Naive thymus-derived CD8-positive, alpha-beta T cell (primary cell): ENCODE measurements at regions of chr1 and their contacts with region 1.

Region 1: GRCh38 chr1:207321079-207321789 is at the start of gene CD55:
- DNase-seq: peak; percentile 94 to 100 (median 100)
- ATAC-seq: peak; percentile 87
- H3K4me3 Mint-ChIP-seq: peak within 1 kb of the TSS; percentile 82 to 99 (median 96)
- H3K27ac Mint-ChIP-seq: peak within 1 kb of the TSS; percentile 98 to 100 (median 100)
- H3K4me1 Mint-ChIP-seq: peaks cover 27 to 70% (median 51%) of the 10 kb centered on the region in 4 donors
- H3K27me3 Mint-ChIP-seq: peaks cover 0 to 4% (median 0%) of the 10 kb centered on the region in 5 donors
- polyA plus RNA-seq, gene CD55: 156 to 193 (median 156) TPM

Region 2: GRCh38 chr1:206925106-206925736 is 396.0 kb before region 1 on chr1:
- POLR2A ChIA-PET with region 1: interaction called, 12 read pairs
- DNase-seq: peak in 9 of 10 donors; percentile 47 to 81 (median 66)
- ATAC-seq: peak; percentile 48 to 52
- H3K4me3 Mint-ChIP-seq: no peak overlapping the region
- H3K27ac Mint-ChIP-seq: no peak overlapping the region
- H3K4me1 Mint-ChIP-seq: peaks cover 18 to 40% (median 28%) of the 10 kb centered on the region in 4 donors
- H3K27me3 Mint-ChIP-seq: no peaks in the 10 kb centered on the region

Region 3: DNA sequence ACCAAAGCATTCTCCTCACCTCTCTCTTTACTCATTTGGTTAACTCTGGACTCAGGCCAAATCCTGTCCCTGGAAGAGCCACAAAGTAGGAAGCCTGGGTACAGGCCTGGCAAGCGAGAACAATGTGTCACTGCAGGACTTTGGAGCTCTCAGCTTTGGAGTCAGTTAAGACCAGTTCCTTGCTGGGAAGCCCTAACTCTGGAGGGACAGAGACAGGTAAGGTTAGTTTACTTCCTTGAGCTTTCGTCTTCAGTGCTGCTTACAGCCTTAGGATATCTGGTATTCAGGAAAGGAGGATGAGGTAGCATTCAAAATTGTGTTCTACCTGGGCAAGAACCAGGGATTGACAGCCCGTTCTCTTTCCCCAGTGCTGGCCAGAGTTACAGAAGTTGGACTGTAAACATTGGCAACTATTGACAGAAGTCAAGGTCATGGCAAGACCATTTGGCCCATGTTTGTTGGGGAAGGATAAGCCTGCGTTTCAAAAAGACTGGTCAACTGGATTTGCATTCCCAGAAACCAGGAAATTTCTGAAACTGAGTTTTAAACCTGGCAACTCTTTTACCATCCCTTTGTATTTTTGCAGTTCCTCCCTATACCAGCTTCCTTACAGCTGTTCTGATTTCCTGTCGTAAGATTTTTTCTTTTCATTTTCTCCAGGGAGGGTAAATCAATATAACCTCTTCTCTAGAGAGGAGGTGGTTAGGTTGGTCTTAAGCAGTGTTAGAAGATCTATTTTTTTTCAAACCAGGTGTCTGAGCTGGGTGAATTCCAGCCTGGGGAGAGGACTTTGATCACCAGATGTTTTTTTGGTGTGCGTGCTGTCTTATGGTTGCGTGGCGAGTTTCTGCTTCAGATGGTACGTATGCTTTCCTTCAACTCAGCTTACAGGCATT is 232.3 kb before region 1 on chr1 and contains the start of gene C4BPB:
- POLR2A ChIA-PET with region 1: interaction called, 10 read pairs
- DNase-seq: peak in 7 of 10 donors; percentile 22 to 66 (median 37)
- ATAC-seq: peak; percentile 79 to 93
- H3K4me3 Mint-ChIP-seq: peak within 1 kb of the TSS; percentile 62 to 88 (median 83)
- H3K27ac Mint-ChIP-seq: peak within 1 kb of the TSS; percentile 20 to 93 (median 82)
- H3K4me1 Mint-ChIP-seq: peaks cover 11 to 35% (median 25%) of the 10 kb centered on the region in 4 donors
- H3K27me3 Mint-ChIP-seq: peaks cover 0 to 4% (median 3%) of the 10 kb centered on the region in 5 donors
- polyA plus RNA-seq, gene C4BPB: 0.32 TPM in 1 of 3 donors, not detected in the others

Region 4: GRCh38 chr1:207288315-207288714 is 32.9 kb before region 1 on chr1:
- POLR2A ChIA-PET with region 1: interaction called, 14 read pairs
- DNase-seq: no peak
- ATAC-seq: no peak
- H3K4me3 Mint-ChIP-seq: no peak overlapping the region
- H3K27ac Mint-ChIP-seq: peak overlapping the region in 2 of 10 donors; percentile 21 to 39
- H3K4me1 Mint-ChIP-seq: peaks cover 4 to 37% (median 25%) of the 10 kb centered on the region in 4 donors
- H3K27me3 Mint-ChIP-seq: no peaks in the 10 kb centered on the region

Region 5: DNA sequence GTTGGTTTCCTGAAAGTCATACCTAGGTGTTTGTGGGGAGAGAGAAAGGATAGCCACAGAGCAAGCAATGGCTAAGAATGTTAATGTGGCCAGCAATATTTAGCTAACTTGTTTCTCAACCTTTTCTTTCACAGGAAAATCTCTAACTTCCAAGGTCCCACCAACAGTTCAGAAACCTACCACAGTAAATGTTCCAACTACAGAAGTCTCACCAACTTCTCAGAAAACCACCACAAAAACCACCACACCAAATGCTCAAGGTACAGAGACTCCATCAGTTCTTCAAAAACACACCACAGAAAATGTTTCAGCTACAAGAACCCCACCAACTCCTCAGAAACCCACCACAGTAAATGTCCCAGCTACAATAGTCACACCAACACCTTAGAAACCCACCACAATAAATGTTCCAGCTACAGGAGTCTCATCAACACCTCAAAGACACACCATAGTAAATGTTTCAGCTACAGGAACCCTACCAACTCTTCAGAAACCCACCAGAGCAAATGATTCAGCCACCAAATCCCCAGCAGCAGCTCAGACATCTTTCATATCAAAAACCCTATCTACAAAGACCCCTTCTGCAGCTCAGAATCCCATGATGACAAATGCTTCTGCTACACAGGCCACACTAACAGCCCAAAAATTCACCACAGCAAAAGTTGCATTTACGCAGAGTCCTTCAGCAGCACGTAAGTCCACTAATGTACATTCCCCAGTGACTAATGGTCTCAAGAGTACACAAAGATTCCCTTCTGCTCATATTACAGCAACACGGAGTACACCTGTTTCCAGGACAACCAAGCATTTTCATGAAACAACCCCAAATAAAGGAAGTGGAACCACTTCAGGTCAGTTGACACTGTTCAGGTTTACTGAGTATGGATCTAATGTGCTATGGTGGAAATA is 15.6 kb after region 1 on chr1:
- POLR2A ChIA-PET with region 1: interaction called, 78 read pairs
- DNase-seq: peak in 7 of 10 donors; percentile 56 to 92 (median 75)
- ATAC-seq: peak; percentile 73 to 77
- H3K4me3 Mint-ChIP-seq: peak overlapping the region; percentile 31 to 73 (median 70)
- H3K27ac Mint-ChIP-seq: peak overlapping the region; percentile 86 to 97 (median 92)
- H3K4me1 Mint-ChIP-seq: peaks cover 34 to 86% (median 73%) of the 10 kb centered on the region in 4 donors
- H3K27me3 Mint-ChIP-seq: no peaks in the 10 kb centered on the region

Region 6: DNA sequence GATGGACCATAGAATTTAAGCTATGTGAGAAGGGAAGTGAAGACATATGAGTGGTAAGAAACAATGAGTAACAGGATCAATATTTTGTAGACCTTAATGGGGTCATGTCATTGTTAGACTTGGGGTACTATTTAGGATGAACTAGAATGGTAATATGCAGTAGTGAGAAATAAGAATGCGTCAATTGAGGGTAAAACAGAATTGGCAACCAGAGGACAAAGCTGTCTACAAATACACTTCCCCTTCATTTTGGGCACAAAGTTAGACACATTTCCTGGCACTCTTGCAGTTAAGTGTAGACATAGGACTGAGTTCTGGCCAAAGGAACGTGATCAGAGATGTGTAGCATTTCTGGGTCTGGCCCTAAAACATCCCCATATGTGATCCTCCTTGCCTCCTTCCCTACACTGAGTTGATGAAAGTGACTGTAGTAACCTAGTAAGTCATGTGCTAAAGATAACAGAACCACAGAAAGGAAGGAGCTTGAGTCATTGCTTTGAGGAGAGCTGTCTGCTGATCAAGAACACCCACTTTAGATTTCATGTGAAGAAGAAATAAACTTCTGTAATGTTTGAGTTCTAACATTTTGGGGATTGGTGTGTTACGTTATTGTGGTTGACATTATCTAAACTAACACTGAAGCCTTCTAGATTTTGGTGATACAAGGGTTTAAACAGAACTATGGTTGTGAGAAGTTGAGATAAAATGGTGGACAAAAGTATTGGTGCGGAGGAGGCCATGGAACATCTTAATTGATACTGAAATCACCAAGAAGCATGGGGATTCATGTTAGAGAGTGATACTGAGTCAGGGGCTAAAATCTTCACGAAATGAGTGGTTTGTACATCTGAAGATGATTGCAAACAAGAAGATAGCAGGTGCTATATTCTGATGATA is 42.0 kb after region 1 on chr1:
- POLR2A ChIA-PET with region 1: interaction called, 12 read pairs
- DNase-seq: peak in 5 of 10 donors; percentile 24 to 70 (median 38)
- ATAC-seq: peak; percentile 88 to 97
- H3K4me3 Mint-ChIP-seq: no peak overlapping the region
- H3K27ac Mint-ChIP-seq: no peak overlapping the region
- H3K4me1 Mint-ChIP-seq: peaks cover 3 to 22% (median 12%) of the 10 kb centered on the region in 4 donors
- H3K27me3 Mint-ChIP-seq: no peaks in the 10 kb centered on the region

Region 7: DNA sequence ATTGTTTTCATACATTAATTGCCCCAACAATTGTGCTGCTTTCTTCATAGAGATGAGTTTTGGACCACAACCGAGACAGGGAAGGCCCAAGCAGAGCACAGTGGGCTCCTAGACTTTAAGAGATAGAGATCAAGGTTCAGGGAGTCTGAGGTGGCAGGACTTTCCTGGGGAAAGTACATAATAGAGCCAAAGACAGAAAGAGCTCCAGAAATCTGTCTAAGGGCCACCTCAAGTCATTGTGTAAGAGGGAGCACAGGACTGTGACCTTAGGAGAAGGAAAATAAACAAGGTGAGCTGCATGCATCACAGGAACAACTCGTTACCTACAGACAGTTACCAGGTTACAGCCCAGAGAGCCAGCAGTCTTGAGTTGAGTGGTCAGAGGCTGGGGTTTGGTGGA is 91.6 kb after region 1 on chr1:
- POLR2A ChIA-PET with region 1: no interaction called
- DNase-seq: no peak
- ATAC-seq: no peak
- H3K4me3 Mint-ChIP-seq: no peak overlapping the region
- H3K27ac Mint-ChIP-seq: peak overlapping the region in 2 of 10 donors; percentile 9 to 36
- H3K4me1 Mint-ChIP-seq: peaks cover 0 to 54% (median 18%) of the 10 kb centered on the region in 4 donors
- H3K27me3 Mint-ChIP-seq: peaks cover 0 to 4% (median 1%) of the 10 kb centered on the region in 5 donors

Region 8: GRCh38 chr1:207454046-207454964 is 133.1 kb after region 1 on chr1 and contains the start of gene CR2:
- POLR2A ChIA-PET with region 1: interaction called, 13 read pairs
- DNase-seq: peak; percentile 42 to 74 (median 52)
- ATAC-seq: peak; percentile 76 to 80
- H3K4me3 Mint-ChIP-seq: peak within 1 kb of the TSS in 9 of 10 donors; percentile 69 to 87 (median 78)
- H3K27ac Mint-ChIP-seq: peak within 1 kb of the TSS in 6 of 10 donors; percentile 60 to 84 (median 66)
- H3K4me1 Mint-ChIP-seq: peaks cover 0 to 14% (median 8%) of the 10 kb centered on the region in 4 donors
- H3K27me3 Mint-ChIP-seq: peaks cover 0 to 23% (median 4%) of the 10 kb centered on the region in 5 donors
- polyA plus RNA-seq, gene CR2: 10.9 to 17.1 (median 11.2) TPM